ENCODE measurements at regions of chr3 and their contacts with region 1.

Region 1: DNA sequence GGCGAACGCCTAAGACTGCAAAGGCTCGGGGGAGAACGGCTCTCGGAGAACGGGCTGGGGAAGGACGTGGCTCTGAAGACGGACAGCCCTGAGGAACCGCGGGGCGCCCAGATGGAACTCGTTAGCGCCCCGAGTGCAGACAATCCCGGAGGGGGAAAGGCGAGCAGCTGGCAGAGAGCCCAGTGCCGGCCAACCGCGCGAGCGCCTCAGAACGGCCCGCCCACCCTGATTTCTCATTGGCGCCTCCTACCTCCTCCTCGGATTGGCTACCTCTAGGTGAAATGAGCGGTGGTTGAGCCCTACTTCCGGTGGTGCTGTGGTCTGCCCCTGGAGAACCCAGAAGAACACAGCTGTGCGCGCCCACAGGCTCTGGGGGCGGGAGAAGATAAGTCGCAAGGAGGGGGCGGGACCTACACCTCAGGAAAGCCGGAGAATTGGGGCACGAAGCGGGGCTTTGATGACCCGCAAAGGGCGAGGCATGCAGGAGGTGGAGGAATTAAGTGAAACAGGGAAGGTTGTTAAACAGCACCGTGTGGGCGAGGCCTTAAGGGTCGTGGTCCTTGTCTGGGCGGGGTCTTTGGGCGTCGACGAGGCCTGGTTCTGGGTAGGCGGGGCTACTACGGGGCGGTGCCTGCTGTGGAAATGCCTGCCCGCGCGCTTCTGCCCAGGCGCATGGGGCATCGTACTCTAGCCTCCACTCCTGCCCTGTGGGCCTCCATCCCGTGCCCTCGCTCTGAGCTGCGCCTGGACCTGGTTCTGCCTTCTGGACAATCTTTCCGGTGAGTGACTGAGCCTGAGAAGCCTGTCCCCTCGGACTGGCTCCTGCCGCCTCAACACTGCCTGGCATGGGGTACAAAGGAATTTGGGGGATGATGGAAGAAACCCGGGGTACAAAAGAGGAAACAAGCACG is at the start of gene OGG1:
- DNase-seq: peak; percentile 85
- ATAC-seq: peak; percentile 98
- H3K4me3 ChIP-seq: peak within 1 kb of the TSS; percentile 90 to 91
- H3K27ac ChIP-seq: peak within 1 kb of the TSS; percentile 88
- H3K4me1 ChIP-seq: peaks cover 7% of the 10 kb centered on the region; the same call in 1 of the 2 replicates
- H3K27me3 ChIP-seq: no peaks in the 10 kb centered on the region
- CTCF ChIP-seq: no peak
- total RNA-seq, gene OGG1: 32.5 TPM

Region 2: GRCh38 chr3:9866639-9867038 is 116.7 kb after region 1 on chr3:
- CTCF ChIA-PET with region 1: no interaction called
- POLR2A ChIA-PET with region 1: interaction called, 16 read pairs
- in situ Hi-C with region 1: no loop called
- intact Hi-C with region 1: no loop called
- DNase-seq: no peak
- ATAC-seq: no peak
- H3K4me3 ChIP-seq: no peak overlapping the region
- H3K27ac ChIP-seq: no peak overlapping the region
- H3K4me1 ChIP-seq: peaks cover 6% of the 10 kb centered on the region; the same call in 1 of the 2 replicates
- H3K27me3 ChIP-seq: no peaks in the 10 kb centered on the region
- CTCF ChIP-seq: no peak

Region 3: DNA sequence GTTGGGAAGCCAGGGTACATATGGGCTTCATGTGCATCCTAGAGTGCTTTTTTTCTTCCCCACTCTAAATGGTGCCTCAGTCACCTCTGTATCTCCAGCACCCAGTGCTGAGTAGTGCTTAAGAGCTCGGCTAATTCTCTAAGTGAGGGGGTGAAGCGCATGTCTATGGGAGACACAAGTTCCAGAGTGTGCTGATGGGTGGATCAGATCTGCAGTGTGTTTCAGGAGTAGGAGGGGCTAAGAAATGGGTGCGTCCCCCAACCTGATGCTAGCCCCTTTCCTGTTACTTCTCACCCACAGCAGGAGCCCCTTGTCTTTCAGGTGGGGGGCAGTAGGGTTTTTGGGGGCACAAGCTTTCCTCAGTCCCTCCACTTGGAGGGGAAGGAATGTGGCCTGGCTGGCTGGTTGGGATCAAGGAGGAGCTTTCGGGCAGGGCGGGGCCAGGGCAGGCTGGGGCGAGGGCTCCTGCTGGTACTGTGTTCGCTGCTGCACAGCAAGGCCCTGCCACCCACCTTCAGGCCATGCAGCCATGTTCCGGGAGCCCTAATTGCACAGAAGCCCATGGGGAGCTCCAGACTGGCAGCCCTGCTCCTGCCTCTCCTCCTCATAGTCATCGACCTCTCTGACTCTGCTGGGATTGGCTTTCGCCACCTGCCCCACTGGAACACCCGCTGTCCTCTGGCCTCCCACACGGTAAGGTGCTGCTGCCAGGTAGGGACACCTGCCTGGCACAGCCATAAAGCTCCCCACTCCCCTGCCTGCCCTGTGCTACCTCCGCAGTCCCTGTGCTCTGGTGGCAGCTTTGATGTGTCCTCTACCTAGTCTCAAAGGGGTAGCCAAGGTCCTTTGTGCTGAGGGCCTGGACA is 152.7 kb after region 1 on chr3 and contains the start of gene IL17RE:
- CTCF ChIA-PET with region 1: no interaction called
- POLR2A ChIA-PET with region 1: no interaction called
- in situ Hi-C with region 1: no loop called
- intact Hi-C with region 1: no loop called
- DNase-seq: no peak
- ATAC-seq: peak; percentile 55; the same call in 1 of the 2 replicates
- H3K4me3 ChIP-seq: no peak within 1 kb of the TSS
- H3K27ac ChIP-seq: no peak within 1 kb of the TSS
- H3K4me1 ChIP-seq: peaks cover 6% of the 10 kb centered on the region
- H3K27me3 ChIP-seq: no peaks in the 10 kb centered on the region
- CTCF ChIP-seq: no peak
- total RNA-seq, gene IL17RE: 1.1 TPM

Region 4: GRCh38 chr3:9965200-9965875 is 215.4 kb after region 1 on chr3:
- CTCF ChIA-PET with region 1: no interaction called
- POLR2A ChIA-PET with region 1: no interaction called
- in situ Hi-C with region 1: no loop called
- intact Hi-C with region 1: no loop called
- DNase-seq: no peak
- ATAC-seq: no peak
- H3K4me3 ChIP-seq: no peak overlapping the region
- H3K27ac ChIP-seq: no peak overlapping the region
- H3K4me1 ChIP-seq: 0 out of 2 replicates have a peak, but pooled peaks cover 1% of the 10 kb centered on the region
- H3K27me3 ChIP-seq: no peaks in the 10 kb centered on the region
- CTCF ChIP-seq: no peak

Region 5: DNA sequence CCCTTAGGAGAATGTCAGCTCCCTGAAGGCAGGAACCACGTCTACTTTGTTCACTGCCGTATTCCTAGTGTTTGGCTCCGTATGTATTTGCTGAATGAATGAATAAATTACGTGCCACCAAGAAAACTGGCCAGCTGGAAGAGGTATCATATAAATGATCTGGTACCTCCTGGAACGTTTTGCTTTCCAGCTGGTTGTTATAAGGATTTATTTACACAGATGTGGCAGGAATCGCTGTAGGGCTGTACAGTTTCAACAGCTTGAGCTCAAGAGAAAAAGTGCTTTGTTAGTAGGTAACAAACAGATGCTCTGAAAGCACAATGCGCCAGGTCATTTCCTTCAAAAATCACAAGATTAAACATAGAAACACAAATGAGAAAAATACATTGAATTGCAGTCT is 864.3 kb after region 1 on chr3:
- CTCF ChIA-PET with region 1: no interaction called
- POLR2A ChIA-PET with region 1: interaction called, 10 read pairs
- in situ Hi-C with region 1: no loop called
- intact Hi-C with region 1: no loop called
- DNase-seq: no peak
- ATAC-seq: no peak
- H3K4me3 ChIP-seq: no peak overlapping the region
- H3K27ac ChIP-seq: no peak overlapping the region
- H3K4me1 ChIP-seq: no peaks in the 10 kb centered on the region
- H3K27me3 ChIP-seq: peaks cover 5% of the 10 kb centered on the region; the same call in 1 of the 2 replicates
- CTCF ChIP-seq: no peak